Common myeloid progenitor, CD34-positive (primary cell): ENCODE measurements at regions of chr7 and their contacts with region 1.

Region 1: GRCh38 chr7:122528879-122529481 is 169.9 kb downstream of the RNF133 start:
- DNase-seq: peak; percentile 31 to 65 (median 54)
- H3K4me3 ChIP-seq: no peak overlapping the region
- H3K27ac ChIP-seq: no peak overlapping the region
- H3K4me1 ChIP-seq: no peaks in the 10 kb centered on the region
- H3K27me3 ChIP-seq: peaks cover 0 to 2% (median 0%) of the 10 kb centered on the region in 5 experiments

Region 2: GRCh38 chr7:122092964-122093797 is 435.8 kb before region 1 on chr7:
- CTCF ChIA-PET with region 1: interaction called, 10 read pairs
- POLR2A ChIA-PET with region 1: no interaction called
- DNase-seq: peak; percentile 80 to 93 (median 90)
- H3K4me3 ChIP-seq: no peak overlapping the region
- H3K27ac ChIP-seq: no peak overlapping the region
- H3K4me1 ChIP-seq: peaks cover 0 to 4% (median 0%) of the 10 kb centered on the region in 4 experiments
- H3K27me3 ChIP-seq: no peaks in the 10 kb centered on the region

Region 3: GRCh38 chr7:122219253-122219865 is 309.6 kb before region 1 on chr7:
- CTCF ChIA-PET with region 1: interaction called, 12 read pairs
- POLR2A ChIA-PET with region 1: no interaction called
- DNase-seq: peak; percentile 5 to 36 (median 8)
- H3K4me3 ChIP-seq: no peak overlapping the region
- H3K27ac ChIP-seq: no peak overlapping the region
- H3K4me1 ChIP-seq: no peaks in the 10 kb centered on the region
- H3K27me3 ChIP-seq: peaks cover 0 to 2% (median 0%) of the 10 kb centered on the region in 5 experiments